ENCODE measurements at regions of chr16 and their contacts with region 1.

Region 1: DNA sequence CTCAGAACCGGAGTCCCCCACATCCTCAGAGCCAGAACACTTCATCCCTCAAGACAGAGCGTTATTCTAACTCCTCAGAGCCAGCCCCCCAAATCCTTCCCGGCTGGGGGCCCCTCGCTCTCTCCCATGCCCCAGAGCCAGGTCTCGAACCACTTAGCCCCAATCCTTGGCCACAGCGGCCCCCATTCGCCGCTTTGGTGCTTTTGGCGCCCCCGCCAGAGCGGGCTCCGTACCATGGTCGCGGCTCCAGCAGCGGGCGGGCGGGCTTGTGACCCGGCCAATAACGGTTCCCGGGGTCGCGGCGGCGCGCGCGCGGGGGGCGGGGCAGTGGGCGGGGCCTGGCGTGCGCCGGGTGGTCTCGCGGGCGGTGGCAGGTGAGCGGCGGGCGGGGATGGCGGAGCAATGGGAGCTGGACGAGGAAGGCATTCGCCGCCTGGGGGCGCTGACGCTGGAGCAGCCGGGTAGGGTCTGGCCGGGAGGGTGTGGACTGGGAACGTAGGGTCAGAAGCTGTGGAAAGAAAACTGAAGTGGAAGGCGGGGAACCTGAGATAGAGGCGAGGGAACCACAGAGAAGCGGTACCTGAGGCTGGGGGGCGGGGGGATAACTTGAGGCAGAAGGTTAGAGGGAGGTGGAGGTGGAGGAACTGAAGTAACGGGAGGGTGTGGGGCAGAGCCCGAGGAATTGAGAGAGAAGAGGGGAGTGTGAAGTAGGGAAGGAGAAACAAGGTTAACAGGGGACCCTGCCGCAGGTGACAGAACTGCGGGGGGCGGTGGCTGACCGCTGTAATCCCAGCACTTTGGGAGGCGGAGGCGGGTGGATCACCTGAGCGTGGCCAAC is at the starts of genes KCTD19 and LRRC36:
- DNase-seq: peak; percentile 71
- H3K4me3 ChIP-seq: peak within 1 kb of the TSS; percentile 54 to 87 (median 83)
- H3K27ac ChIP-seq: peak within 1 kb of the TSS; percentile 61
- H3K4me1 ChIP-seq: peaks cover 17% of the 10 kb centered on the region
- H3K27me3 ChIP-seq: peaks cover 10 to 15% of the 10 kb centered on the region in 2 experiments
- CTCF ChIP-seq: peak; percentile 68 to 76
- POLR2A ChIP-seq: no peak
- total RNA-seq, gene KCTD19: 0.16 and 0.44 TPM in 2 replicates
- total RNA-seq, gene LRRC36: 2.0 and 2.4 TPM in 2 replicates

Region 2: DNA sequence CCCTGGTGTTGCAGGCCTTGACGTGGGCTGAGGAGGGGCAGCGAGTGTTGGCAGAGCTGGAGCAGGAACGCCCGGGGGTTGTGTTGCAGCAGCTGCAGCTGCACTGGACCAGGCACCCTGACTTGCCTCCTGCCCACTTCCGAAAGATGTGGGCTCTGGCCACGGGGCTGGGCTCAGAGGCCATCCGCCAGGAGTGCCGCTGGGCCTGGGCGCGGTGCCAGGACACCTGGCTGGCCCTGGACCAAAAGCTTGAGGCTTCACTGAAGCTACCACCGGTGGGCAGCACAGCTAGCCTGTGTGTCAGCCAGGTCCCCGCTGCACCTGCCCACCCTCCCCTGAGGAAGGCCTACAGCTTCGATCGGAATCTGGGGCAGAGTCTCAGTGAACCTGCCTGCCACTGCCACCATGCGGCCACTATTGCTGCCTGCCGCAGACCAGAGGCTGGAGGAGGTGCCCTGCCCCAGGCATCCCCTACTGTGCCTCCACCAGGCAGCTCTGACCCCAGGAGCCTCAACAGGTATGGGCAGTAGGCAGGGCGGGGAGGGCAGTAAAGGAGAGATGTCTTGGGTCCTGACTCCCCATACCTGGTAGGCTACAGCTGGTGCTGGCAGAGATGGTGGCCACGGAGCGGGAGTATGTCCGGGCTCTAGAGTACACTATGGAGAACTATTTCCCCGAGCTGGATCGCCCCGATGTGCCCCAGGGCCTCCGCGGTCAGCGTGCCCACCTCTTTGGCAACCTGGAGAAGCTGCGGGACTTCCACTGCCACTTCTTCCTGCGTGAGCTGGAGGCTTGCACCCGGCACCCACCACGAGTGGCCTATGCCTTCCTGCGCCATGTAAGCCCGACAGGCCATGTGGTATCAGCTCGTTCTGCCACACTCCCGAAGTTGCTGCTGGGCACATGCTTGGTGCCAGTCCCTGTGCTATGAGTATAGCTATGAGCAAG is 41.7 kb before region 1 on chr16:
- CTCF ChIA-PET with region 1: interaction called, 14 read pairs
- POLR2A ChIA-PET with region 1: no interaction called
- dilution Hi-C with region 1: no loop called
- intact Hi-C with region 1: no loop called
- DNase-seq: peak; percentile 13
- H3K4me3 ChIP-seq: no peak overlapping the region
- H3K27ac ChIP-seq: no peak overlapping the region
- H3K4me1 ChIP-seq: no peaks in the 10 kb centered on the region
- H3K27me3 ChIP-seq: no peaks in the 10 kb centered on the region
- CTCF ChIP-seq: peak; percentile 29 to 65
- POLR2A ChIP-seq: no peak

Region 3: DNA sequence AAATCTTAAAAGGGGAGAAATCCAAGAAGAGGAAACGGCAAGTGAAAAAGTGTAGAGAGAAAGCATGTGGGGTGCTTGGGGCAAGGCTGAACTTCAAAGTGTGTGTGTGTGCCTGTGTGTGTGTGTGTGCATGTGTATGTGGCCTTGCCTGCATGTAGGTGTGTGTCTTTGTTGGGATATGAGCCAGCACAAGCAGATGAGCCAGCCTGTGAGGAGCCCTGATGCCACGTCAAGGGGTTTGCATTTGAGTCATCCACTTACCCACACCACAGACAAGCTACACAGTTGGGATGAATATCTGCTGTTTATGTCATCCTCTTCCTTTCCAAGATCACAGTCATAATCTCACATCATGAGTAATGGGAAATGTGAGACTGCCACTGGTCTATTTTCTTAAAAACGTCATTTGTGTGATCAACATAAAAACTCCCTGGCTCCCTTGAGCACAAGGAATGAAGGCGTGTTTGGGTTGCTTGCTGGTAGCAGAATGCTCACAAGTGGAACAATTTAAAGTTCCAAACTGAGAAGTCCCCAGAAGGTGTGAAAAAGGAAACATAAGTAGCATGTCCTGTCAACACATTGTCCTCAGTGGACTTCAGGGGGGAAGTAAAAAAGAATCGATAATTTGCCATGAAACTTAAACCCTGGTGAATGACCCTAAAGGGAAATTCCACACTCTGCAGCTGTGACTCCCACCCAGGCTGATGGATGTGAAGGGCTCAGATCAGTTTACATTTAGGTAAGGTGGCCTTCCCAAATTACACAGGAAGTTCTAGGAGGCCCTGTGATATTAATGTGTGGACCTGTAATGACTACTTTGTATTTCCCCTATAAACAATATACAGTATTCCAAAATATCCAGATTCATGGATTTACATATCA is 14.8 kb before region 1 on chr16:
- CTCF ChIA-PET with region 1: interaction called, 15 read pairs
- POLR2A ChIA-PET with region 1: interaction called, 8 read pairs
- dilution Hi-C with region 1: no loop called
- intact Hi-C with region 1: no loop called
- DNase-seq: peak; percentile 92
- H3K4me3 ChIP-seq: no peak overlapping the region
- H3K27ac ChIP-seq: peak overlapping the region; percentile 72
- H3K4me1 ChIP-seq: peaks cover 12% of the 10 kb centered on the region
- H3K27me3 ChIP-seq: no peaks in the 10 kb centered on the region
- CTCF ChIP-seq: no peak
- POLR2A ChIP-seq: peak; percentile 36

Region 4: DNA sequence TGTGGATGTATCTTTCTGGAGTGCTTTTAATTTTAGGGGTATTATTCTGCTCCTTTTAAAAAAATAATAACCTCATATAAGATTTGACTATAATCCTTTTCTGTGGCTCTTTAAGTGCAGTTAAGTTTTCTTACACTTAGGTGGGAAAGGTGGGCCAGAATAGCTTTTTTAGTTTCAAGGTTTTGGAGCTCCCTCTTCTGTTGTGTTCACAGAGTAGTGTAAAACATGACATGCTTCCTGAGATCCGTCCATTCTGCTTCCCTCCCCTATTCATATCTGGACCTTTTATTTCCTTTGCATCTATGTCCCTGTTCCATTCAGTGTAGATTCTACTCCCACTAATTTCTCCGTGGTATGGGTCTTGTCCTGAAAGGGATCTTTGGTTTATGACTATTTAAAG is 12.8 kb after region 1 on chr16:
- CTCF ChIA-PET with region 1: interaction called, 39 read pairs
- POLR2A ChIA-PET with region 1: no interaction called
- dilution Hi-C with region 1: no loop called
- intact Hi-C with region 1: no loop called
- DNase-seq: peak; percentile 40
- H3K4me3 ChIP-seq: no peak overlapping the region
- H3K27ac ChIP-seq: no peak overlapping the region
- H3K4me1 ChIP-seq: no peaks in the 10 kb centered on the region
- H3K27me3 ChIP-seq: no peaks in the 10 kb centered on the region
- CTCF ChIP-seq: no peak
- POLR2A ChIP-seq: no peak

Region 5: GRCh38 chr16:67349172-67349571 is 22.5 kb after region 1 on chr16:
- CTCF ChIA-PET with region 1: interaction called, 31 read pairs
- POLR2A ChIA-PET with region 1: interaction called, 4 read pairs
- dilution Hi-C with region 1: no loop called
- intact Hi-C with region 1: no loop called
- DNase-seq: peak; percentile 59
- H3K4me3 ChIP-seq: no peak overlapping the region
- H3K27ac ChIP-seq: no peak overlapping the region
- H3K4me1 ChIP-seq: peaks cover 23% of the 10 kb centered on the region
- H3K27me3 ChIP-seq: no peaks in the 10 kb centered on the region
- CTCF ChIP-seq: peak; percentile 32 to 49
- POLR2A ChIP-seq: no peak

Measured in endothelial cell of umbilical vein (primary cell).